ENCODE measurements at regions of chr11 and their contacts with region 1.

Region 1: GRCh38 chr11:1515082-1516060 is 28.8 kb upstream of the MOB2 start:
- DNase-seq: peak; percentile 82
- ATAC-seq: peak; percentile 76 to 81 (median 77)
- H3K4me3 ChIP-seq: no peak overlapping the region
- H3K4me3 Mint-ChIP-seq: peak overlapping the region; percentile 21
- H3K27ac ChIP-seq: no peak overlapping the region
- H3K27ac Mint-ChIP-seq: peak overlapping the region in 1 of 2 donors; percentile 81
- H3K4me1 ChIP-seq: peaks cover 60% of the 10 kb centered on the region
- H3K4me1 Mint-ChIP-seq: peaks cover 67 to 86% of the 10 kb centered on the region in 2 donors
- H3K27me3 ChIP-seq: no peaks in the 10 kb centered on the region
- H3K27me3 Mint-ChIP-seq: no peaks in the 10 kb centered on the region
- CTCF ChIP-seq: peak; percentile 90

Region 2: GRCh38 chr11:1202776-1203504 is 312.4 kb before region 1 on chr11:
- intact Hi-C with region 1: loop called (anchors 1 kb)
- DNase-seq: peak; percentile 64 to 81
- ATAC-seq: peak; percentile 78 to 96 (median 95)
- H3K4me3 ChIP-seq: no peak overlapping the region
- H3K4me3 Mint-ChIP-seq: no peak overlapping the region
- H3K27ac ChIP-seq: no peak overlapping the region
- H3K27ac Mint-ChIP-seq: no peak overlapping the region
- H3K4me1 ChIP-seq: peaks cover 7% of the 10 kb centered on the region
- H3K4me1 Mint-ChIP-seq: no peaks in the 10 kb centered on the region
- H3K27me3 ChIP-seq: no peaks in the 10 kb centered on the region
- H3K27me3 Mint-ChIP-seq: no peaks in the 10 kb centered on the region
- CTCF ChIP-seq: peak; percentile 86

Region 3: GRCh38 chr11:1262172-1263006 is 253.0 kb before region 1 on chr11:
- intact Hi-C with region 1: loop called (anchors 5 kb)
- DNase-seq: peak; percentile 82 to 90
- ATAC-seq: peak; percentile 91 to 92 (median 92)
- H3K4me3 ChIP-seq: peak overlapping the region; percentile 56
- H3K4me3 Mint-ChIP-seq: peak overlapping the region; percentile 80
- H3K27ac ChIP-seq: peak overlapping the region; percentile 73
- H3K27ac Mint-ChIP-seq: peak overlapping the region; percentile 67 to 89
- H3K4me1 ChIP-seq: peaks cover 17% of the 10 kb centered on the region
- H3K4me1 Mint-ChIP-seq: peaks cover 6 to 16% of the 10 kb centered on the region in 2 donors
- H3K27me3 ChIP-seq: no peaks in the 10 kb centered on the region
- H3K27me3 Mint-ChIP-seq: no peaks in the 10 kb centered on the region
- CTCF ChIP-seq: no peak

Region 4: GRCh38 chr11:1532014-1532586 is 16.7 kb after region 1 on chr11:
- intact Hi-C with region 1: no loop called
- DNase-seq: no peak
- ATAC-seq: no peak
- H3K4me3 ChIP-seq: no peak overlapping the region
- H3K4me3 Mint-ChIP-seq: no peak overlapping the region
- H3K27ac ChIP-seq: no peak overlapping the region
- H3K27ac Mint-ChIP-seq: peak overlapping the region in 1 of 2 donors; percentile 45
- H3K4me1 ChIP-seq: peaks cover 42% of the 10 kb centered on the region
- H3K4me1 Mint-ChIP-seq: peaks cover 49 to 62% of the 10 kb centered on the region in 2 donors
- H3K27me3 ChIP-seq: no peaks in the 10 kb centered on the region
- H3K27me3 Mint-ChIP-seq: no peaks in the 10 kb centered on the region
- CTCF ChIP-seq: no peak